Head of caudate nucleus (tissue), 42 donors: ENCODE measurements at regions of chr12 and their contacts with region 1.

Region 1: GRCh38 chr12:53766881-53767280 is 15.1 kb upstream of the CISTR start:
- DNase-seq: no peak

Region 2: GRCh38 chr12:53251477-53252348 is 515.2 kb before region 1 on chr12:
- intact Hi-C with region 1: no loop called
- DNase-seq: peak; percentile 56 to 91 (median 80)

Region 3: DNA sequence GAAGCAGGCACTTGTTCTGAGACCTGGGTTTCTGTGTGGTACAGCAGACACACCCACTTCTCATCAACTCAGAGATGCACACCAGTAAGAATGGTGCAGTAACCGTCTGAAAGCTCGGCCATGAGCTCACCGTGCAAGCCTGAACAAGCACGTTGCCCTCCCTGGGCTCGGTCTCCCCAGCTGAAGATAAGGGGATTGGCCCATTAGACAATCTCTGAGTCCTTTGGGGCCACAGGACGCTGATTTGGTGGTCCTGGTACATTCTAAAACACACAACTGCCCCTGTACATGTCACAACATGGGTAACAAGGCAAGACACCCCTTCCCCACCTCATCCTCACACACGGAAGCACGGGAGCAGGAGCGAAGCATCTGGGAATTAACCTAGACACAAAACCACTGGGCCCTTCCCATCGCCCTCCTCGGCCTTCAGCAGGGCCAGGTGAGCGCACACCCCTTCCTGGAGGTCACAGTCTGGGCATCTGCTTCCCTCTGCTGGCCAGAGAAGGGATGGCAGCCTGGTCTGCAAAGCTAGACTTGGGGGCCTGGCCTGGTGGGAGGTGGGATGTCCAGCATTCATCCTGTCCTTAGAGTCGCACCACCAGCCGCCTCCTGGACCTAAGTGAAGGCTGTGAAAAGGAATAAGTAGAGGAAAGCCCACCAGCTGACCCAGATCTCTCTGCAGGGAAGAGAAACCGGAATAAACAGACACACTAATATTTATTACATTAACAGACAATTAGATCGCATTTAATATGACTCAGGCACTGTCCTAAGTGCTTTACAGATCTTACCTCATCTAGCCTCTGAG is 440.8 kb after region 1 on chr12:
- intact Hi-C with region 1: loop called (anchors 10 kb)
- DNase-seq: peak in 41 of 42 donors; percentile 34 to 87 (median 68)